ENCODE measurements at regions of chr11 and their contacts with region 1.

Region 1: GRCh38 chr11:78645226-78646202 is 70.8 kb upstream of the NARS2 start:
- DNase-seq: peak; percentile 80
- H3K4me3 Mint-ChIP-seq: peak overlapping the region; percentile 52
- H3K27ac Mint-ChIP-seq: no peak overlapping the region
- H3K4me1 Mint-ChIP-seq: peaks cover 8% of the 10 kb centered on the region
- H3K27me3 Mint-ChIP-seq: peaks cover 12% of the 10 kb centered on the region
- CTCF ChIP-seq: peak; percentile 97

Region 2: GRCh38 chr11:78354408-78355308 is 290.9 kb before region 1 on chr11:
- CTCF ChIA-PET with region 1: no interaction called
- POLR2A ChIA-PET with region 1: no interaction called
- intact Hi-C with region 1: no loop called
- DNase-seq: no peak
- H3K4me3 Mint-ChIP-seq: no peak overlapping the region
- H3K27ac Mint-ChIP-seq: no peak overlapping the region
- H3K4me1 Mint-ChIP-seq: peaks cover 14% of the 10 kb centered on the region
- H3K27me3 Mint-ChIP-seq: no peaks in the 10 kb centered on the region
- CTCF ChIP-seq: no peak

Region 3: GRCh38 chr11:78666675-78667160 is 21.2 kb after region 1 on chr11:
- CTCF ChIA-PET with region 1: interaction called, 47 read pairs
- POLR2A ChIA-PET with region 1: no interaction called
- intact Hi-C with region 1: no loop called
- DNase-seq: no peak
- H3K4me3 Mint-ChIP-seq: no peak overlapping the region
- H3K27ac Mint-ChIP-seq: no peak overlapping the region
- H3K4me1 Mint-ChIP-seq: peaks cover 17% of the 10 kb centered on the region
- H3K27me3 Mint-ChIP-seq: no peaks in the 10 kb centered on the region
- CTCF ChIP-seq: no peak

Region 4: DNA sequence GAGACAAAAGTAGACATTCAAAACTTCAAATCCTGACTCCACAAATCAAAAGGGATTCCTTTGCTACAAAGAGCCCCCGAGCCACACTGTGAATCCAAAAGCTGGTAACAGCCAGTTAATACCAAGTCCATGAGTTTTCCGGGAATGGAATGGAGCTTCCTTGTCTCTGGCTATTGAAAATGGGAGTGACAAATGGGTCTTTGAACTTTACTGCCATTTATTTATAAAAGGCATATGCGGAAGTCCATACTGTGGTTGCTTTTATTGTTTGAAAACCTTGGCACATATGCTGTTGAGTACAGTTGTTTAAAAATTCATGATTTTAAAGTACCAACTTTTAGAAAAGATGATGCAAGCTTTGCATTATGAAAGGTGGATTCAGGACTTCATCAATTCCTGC is 135.4 kb after region 1 on chr11:
- CTCF ChIA-PET with region 1: interaction called, 10 read pairs
- POLR2A ChIA-PET with region 1: no interaction called
- intact Hi-C with region 1: no loop called
- DNase-seq: no peak
- H3K4me3 Mint-ChIP-seq: no peak overlapping the region
- H3K27ac Mint-ChIP-seq: no peak overlapping the region
- H3K4me1 Mint-ChIP-seq: peaks cover 13% of the 10 kb centered on the region
- H3K27me3 Mint-ChIP-seq: no peaks in the 10 kb centered on the region
- CTCF ChIP-seq: no peak

Region 5: DNA sequence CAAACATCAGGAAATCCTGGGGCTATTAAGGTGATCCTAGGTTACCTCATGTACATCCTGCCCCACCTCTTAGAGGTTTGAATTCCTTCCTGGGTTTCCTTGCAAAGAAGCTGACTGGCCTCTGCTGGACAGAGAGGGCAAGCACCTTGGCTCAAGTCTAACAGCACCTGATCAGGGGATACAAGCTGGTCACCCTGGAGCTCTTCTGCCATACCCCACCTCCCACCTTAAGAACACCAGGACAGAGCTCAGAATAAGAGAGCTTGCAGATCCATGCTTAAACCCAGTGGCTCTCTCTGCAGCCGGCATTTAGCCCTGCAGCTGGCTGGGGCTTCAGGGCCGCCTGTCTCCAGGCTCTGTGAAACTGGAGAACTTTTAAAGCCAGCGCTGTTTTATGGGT is 315.7 kb after region 1 on chr11:
- CTCF ChIA-PET with region 1: interaction called, 176 read pairs
- POLR2A ChIA-PET with region 1: interaction called, 5 read pairs
- intact Hi-C with region 1: no loop called
- DNase-seq: peak; percentile 81
- H3K4me3 Mint-ChIP-seq: no peak overlapping the region
- H3K27ac Mint-ChIP-seq: no peak overlapping the region
- H3K4me1 Mint-ChIP-seq: no peaks in the 10 kb centered on the region
- H3K27me3 Mint-ChIP-seq: no peaks in the 10 kb centered on the region
- CTCF ChIP-seq: peak; percentile 59

Region 6: GRCh38 chr11:79263001-79263400 is 617.5 kb after region 1 on chr11:
- CTCF ChIA-PET with region 1: interaction called, 4 read pairs
- POLR2A ChIA-PET with region 1: no interaction called
- intact Hi-C with region 1: loop called (anchors 5 kb)
- DNase-seq: no peak
- H3K4me3 Mint-ChIP-seq: no peak overlapping the region
- H3K27ac Mint-ChIP-seq: no peak overlapping the region
- H3K4me1 Mint-ChIP-seq: no peaks in the 10 kb centered on the region
- H3K27me3 Mint-ChIP-seq: no peaks in the 10 kb centered on the region
- CTCF ChIP-seq: no peak

Region 7: DNA sequence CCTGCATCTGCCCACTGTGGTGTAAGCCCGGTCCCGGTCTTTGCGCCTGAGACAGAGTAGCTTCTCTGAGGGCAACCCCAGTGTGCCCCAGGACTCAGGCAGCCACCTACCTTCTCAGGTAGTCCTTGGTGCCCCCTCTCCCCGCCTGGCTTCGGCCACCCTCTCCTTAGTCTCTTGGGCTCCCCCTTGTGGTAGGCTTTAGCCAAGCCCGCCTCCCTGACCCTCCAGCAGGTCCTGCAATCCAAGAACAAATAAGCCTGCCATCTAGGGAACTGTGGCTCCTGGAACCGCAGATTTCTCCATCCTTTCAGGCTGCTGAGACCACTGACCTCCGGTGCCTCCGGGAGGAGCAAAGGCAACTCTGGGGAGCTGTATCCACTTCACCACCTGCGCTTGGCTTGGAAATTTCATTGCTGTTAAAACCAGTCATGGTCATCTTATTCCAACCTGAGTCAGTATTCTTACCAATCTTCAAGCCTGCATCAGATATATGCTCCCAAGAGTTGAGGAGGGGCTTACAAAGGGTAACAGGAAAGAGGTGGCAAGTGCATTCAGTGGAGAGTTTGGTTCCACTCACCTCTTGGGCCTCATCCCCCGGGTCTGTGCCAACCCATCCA is 848.1 kb after region 1 on chr11:
- CTCF ChIA-PET with region 1: interaction called, 45 read pairs
- POLR2A ChIA-PET with region 1: no interaction called
- intact Hi-C with region 1: loop called (anchors 1 kb)
- DNase-seq: peak; percentile 78
- H3K4me3 Mint-ChIP-seq: no peak overlapping the region
- H3K27ac Mint-ChIP-seq: no peak overlapping the region
- H3K4me1 Mint-ChIP-seq: peaks cover 7% of the 10 kb centered on the region
- H3K27me3 Mint-ChIP-seq: peaks cover 20% of the 10 kb centered on the region
- CTCF ChIP-seq: peak; percentile 89

Measured in MCF 10A (cell line).